Activated naive CD4-positive, alpha-beta T cell treated with anti-CD3 and anti-CD28 coated beads, Interleukin-2, amount 10 ng/mL, durations not matched to agents 7 days and 5 days (primary cell): ENCODE measurements at regions of chr16 and their contacts with region 1.

Region 1: GRCh38 chr16:31382485-31383161 is 10.5 kb upstream of the ITGAD start:
- DNase-seq: peak; percentile 81
- H3K4me3 Mint-ChIP-seq: no peak overlapping the region
- H3K27ac Mint-ChIP-seq: no peak overlapping the region
- H3K4me1 Mint-ChIP-seq: peaks cover 11% of the 10 kb centered on the region
- H3K27me3 Mint-ChIP-seq: peaks cover 68% of the 10 kb centered on the region

Region 2: DNA sequence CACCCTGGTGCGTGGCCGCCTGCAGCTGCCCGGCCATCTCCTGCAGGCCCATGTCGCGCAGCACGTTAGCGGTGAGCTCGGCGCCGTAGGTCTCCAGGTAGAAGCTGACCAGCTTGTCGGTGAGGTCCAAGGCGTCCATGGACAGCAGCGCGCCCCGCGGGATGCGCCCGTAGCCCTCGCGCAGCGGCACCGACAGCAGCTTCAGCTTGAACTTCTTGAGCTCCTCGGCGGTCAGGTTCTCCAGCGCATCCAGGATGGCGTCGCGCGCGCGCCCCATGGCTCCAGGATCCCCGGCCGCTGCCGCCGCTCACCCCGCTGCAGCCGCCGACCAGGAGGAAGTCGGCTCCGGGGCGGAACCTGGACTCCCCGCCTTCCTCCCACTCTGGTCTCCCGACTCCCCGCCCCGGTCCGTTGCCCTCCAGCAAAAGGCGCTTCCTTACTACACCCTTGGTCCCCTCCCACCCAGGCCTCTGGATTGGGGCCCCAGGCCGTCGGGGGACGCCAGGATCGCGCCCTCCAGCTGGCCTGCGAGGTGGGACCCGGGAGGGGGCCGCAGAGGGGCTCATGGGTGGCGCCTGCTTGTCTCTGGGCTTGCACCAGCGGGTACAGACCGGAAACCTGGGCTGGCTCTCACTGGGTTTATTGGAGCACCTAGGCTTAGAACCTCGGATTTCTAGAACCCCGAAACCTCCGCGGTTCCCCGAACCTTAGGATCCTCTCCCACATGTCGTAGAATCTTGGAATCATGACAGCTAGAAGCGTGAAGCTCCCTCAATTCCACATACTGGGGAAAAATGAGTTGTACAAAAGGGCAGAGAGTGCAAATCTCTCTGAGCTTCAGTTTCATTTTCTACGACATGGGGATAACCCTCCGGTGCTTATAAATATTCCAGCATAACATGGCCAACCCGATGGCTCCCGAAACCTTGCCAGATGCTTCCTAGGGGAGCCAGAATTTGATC is 179.9 kb before region 1 on chr16 and contains the start of gene PYCARD:
- CTCF ChIA-PET with region 1: interaction called, 22 read pairs
- DNase-seq: peak; percentile 68
- H3K4me3 Mint-ChIP-seq: peak within 1 kb of the TSS; percentile 88
- H3K27ac Mint-ChIP-seq: peak within 1 kb of the TSS; percentile 80
- H3K4me1 Mint-ChIP-seq: peaks cover 66% of the 10 kb centered on the region
- H3K27me3 Mint-ChIP-seq: peaks cover 35% of the 10 kb centered on the region

Region 3: GRCh38 chr16:31365131-31365865 is 17.3 kb before region 1 on chr16:
- CTCF ChIA-PET with region 1: interaction called, 11 read pairs
- DNase-seq: no peak
- H3K4me3 Mint-ChIP-seq: no peak overlapping the region
- H3K27ac Mint-ChIP-seq: no peak overlapping the region
- H3K4me1 Mint-ChIP-seq: peaks cover 34% of the 10 kb centered on the region
- H3K27me3 Mint-ChIP-seq: peaks cover 12% of the 10 kb centered on the region

Region 4: DNA sequence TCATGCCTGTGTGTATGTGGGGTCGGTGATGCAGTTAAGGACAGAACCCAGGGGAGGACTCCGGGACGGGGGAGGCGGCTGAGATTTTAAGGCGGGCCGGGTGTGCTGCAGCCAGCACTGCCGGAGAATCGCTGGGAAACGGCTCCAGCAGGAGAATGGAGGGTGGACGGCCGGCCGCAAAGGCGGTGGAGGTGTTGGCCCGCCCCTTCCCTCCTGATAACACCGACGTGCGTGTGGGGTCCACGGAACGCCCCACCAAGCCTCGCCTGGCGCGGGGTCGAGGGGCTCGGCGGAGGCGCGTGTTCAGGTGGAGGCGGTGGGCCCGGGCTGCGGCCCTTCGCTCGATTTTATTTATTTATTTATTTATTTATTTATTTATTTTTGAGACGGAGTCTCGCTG is 59.3 kb after region 1 on chr16:
- CTCF ChIA-PET with region 1: interaction called, 13 read pairs
- DNase-seq: no peak
- H3K4me3 Mint-ChIP-seq: peak overlapping the region; percentile 78
- H3K27ac Mint-ChIP-seq: no peak overlapping the region
- H3K4me1 Mint-ChIP-seq: peaks cover 12% of the 10 kb centered on the region
- H3K27me3 Mint-ChIP-seq: peaks cover 16% of the 10 kb centered on the region

Region 5: GRCh38 chr16:31507929-31508705 is 125.5 kb after region 1 on chr16 and contains the start of gene RUSF1:
- CTCF ChIA-PET with region 1: no interaction called
- DNase-seq: peak; percentile 92
- H3K4me3 Mint-ChIP-seq: peak within 1 kb of the TSS; percentile 94
- H3K27ac Mint-ChIP-seq: peak within 1 kb of the TSS; percentile 94
- H3K4me1 Mint-ChIP-seq: peaks cover 55% of the 10 kb centered on the region
- H3K27me3 Mint-ChIP-seq: no peaks in the 10 kb centered on the region